Activated CD4-positive, alpha-beta memory T cell treated with anti-CD3 and anti-CD28 coated beads for 36 hours (primary cell): ENCODE measurements at regions of chr11 and their contacts with region 1.

Region 1: DNA sequence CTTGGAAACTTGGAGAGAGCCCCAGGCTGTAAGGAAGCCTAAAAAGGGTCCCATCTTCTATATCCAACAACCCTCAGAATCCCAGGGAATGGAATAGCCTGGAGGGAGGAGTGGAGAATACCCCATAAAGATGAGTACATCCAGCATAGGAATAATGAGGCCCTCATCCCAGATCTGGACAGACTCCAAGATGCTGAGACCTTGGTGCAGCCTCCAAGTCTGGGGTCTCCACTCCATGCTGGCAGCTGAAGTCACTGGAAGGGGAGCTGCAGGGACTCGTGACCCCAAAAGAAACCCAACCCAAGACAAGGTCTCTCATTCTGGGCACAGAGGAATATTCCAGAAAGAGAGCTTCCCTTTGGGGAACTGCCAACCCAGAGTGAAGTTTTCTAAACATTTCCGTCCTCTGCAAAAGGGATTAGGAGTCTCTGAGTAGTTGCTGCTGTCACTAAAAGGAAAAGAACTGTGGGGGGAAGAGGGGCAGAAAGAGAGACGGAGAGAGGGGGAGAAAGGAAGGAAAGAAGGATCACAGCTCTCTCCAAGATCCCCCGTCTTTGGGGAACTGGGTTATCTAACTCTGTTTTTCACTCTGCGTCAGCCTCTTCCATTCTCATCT is 589 bp downstream of the SCGB1A1 start:
- DNase-seq: no peak
- H3K4me3 Mint-ChIP-seq: no peak overlapping the region
- H3K27ac Mint-ChIP-seq: no peak overlapping the region
- H3K4me1 Mint-ChIP-seq: peaks cover under 1% of the 10 kb centered on the region
- H3K27me3 Mint-ChIP-seq: no peaks in the 10 kb centered on the region

Region 2: GRCh38 chr11:62400760-62401159 is 18.7 kb before region 1 on chr11:
- CTCF ChIA-PET with region 1: interaction called, 49 read pairs
- POLR2A ChIA-PET with region 1: no interaction called
- intact Hi-C with region 1: loop called (anchors 2 kb)
- DNase-seq: no peak
- H3K4me3 Mint-ChIP-seq: no peak overlapping the region
- H3K27ac Mint-ChIP-seq: no peak overlapping the region
- H3K4me1 Mint-ChIP-seq: peaks cover 25% of the 10 kb centered on the region
- H3K27me3 Mint-ChIP-seq: no peaks in the 10 kb centered on the region

Region 3: DNA sequence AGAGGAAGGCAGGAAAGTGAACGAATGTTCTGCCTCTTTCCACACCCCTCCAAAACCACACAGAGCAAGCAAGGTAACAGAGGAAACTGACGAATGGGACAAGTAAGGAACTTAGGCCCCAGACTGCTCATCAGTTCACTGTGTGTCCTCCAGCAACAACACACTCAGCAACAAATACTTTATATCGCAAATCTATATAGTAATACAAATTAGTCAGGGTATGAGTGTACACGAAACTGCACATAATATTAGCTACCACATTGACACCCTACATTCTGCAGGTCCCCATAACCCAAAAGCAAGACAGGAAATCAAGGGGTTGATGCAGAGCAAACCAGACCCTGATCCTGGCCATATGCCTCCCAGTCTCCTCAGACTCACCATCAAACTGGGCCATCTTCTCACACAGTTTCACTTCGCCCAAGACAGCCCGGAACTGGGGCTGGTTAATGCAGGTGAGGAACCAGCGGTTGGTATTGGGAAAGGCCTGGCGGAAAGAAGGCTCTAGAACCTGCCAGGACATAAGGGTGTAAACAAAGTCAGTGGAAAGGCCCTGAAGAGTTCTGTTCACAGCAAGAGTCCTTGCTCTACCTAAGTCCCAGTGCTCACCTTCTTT is 147.7 kb after region 1 on chr11:
- CTCF ChIA-PET with region 1: interaction called, 161 read pairs
- POLR2A ChIA-PET with region 1: no interaction called
- intact Hi-C with region 1: no loop called
- DNase-seq: no peak
- H3K4me3 Mint-ChIP-seq: no peak overlapping the region
- H3K27ac Mint-ChIP-seq: peak overlapping the region; percentile 85
- H3K4me1 Mint-ChIP-seq: peaks cover 62% of the 10 kb centered on the region
- H3K27me3 Mint-ChIP-seq: no peaks in the 10 kb centered on the region